IMR-90 (cell line): ENCODE measurements at regions of chr10 and their contacts with region 1.

Region 1: DNA sequence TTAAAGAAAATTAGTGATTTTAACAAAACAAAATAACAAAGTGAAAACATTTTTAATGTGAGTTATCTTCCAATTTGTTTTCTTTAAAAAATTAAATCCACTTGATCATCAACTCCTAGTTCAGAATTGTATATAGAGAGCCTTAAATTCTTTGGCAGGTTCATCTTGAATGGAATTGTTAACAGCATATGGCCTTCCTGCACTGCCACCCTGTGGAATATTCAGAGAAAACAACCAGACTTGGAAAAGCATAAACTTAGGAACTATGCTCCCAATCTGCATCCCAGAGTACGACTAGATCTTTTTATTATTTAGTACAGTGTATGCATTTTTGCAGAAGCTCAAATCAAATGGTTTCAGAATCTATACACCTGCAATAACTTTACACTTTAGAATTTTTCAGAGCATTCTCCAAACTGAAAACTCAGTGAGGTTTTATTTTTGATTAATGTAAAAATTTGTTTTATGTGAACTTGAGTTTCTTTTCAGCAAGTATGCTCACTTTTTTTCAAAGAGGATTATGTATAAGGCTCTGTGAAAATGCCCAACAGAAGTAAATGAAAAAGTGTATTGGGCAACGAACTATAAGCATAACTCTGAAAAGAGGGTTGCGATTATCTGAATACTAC is 44.9 kb upstream of the ANK3 start:
- DNase-seq: peak; percentile 74
- ATAC-seq: peak; percentile 58
- H3K4me3 ChIP-seq: no peak overlapping the region
- H3K27ac ChIP-seq: no peak overlapping the region
- H3K4me1 ChIP-seq: peaks cover 7% of the 10 kb centered on the region
- H3K27me3 ChIP-seq: peaks cover 2% of the 10 kb centered on the region; the same call in 1 of the 2 replicates
- CTCF ChIP-seq: peak; percentile 87
- POLR2A ChIP-seq: peak; percentile 50; the same call in 1 of the 2 replicates
- RAD21 ChIP-seq: peak; percentile 97

Region 2: DNA sequence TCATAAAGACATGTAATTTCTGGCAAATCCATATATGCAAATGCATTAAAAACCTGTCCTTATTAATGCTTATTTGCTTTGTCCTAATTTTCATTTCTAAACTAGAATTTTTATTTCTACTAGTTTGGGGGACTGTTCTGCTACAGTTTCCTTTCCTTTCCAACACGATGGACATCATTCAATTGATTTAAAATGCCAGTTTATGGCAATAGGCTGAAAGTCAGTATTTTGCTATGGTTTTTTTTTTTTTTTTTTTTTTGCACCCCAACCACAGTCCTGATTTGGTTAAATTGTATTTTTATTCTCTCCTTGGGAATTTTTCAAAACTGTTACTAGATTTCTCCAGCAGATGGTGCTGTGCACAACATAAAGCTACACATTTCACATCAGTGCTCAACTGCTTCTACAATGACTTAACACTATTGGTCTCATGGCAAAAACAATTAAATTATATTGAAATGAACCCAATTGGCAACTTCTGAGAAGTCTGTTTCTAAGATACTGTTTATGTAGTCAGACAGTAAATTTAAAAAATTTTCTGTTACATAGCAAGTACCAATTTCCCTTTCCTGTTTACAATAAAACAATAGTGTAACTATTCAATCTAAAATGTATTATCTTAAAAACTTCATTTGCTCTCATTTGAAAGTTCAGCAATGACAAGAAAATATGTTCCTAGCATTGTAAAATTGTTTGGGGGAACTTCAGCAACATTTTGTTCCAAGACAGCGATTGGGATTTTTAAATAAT is 334.4 kb before region 1 on chr10:
- CTCF ChIA-PET with region 1: interaction called, 3 read pairs
- POLR2A ChIA-PET with region 1: no interaction called
- dilution Hi-C with region 1: no loop called
- in situ Hi-C with region 1: no loop called
- intact Hi-C with region 1: loop called (anchors 1 kb)
- DNase-seq: peak; percentile 63
- ATAC-seq: peak; percentile 63
- H3K4me3 ChIP-seq: no peak overlapping the region
- H3K27ac ChIP-seq: no peak overlapping the region
- H3K4me1 ChIP-seq: peaks cover 1% of the 10 kb centered on the region; the same call in 1 of the 2 replicates
- H3K27me3 ChIP-seq: peaks cover 1% of the 10 kb centered on the region; the same call in 1 of the 2 replicates
- CTCF ChIP-seq: peak; percentile 69
- POLR2A ChIP-seq: no peak
- RAD21 ChIP-seq: peak; percentile 73

Region 3: DNA sequence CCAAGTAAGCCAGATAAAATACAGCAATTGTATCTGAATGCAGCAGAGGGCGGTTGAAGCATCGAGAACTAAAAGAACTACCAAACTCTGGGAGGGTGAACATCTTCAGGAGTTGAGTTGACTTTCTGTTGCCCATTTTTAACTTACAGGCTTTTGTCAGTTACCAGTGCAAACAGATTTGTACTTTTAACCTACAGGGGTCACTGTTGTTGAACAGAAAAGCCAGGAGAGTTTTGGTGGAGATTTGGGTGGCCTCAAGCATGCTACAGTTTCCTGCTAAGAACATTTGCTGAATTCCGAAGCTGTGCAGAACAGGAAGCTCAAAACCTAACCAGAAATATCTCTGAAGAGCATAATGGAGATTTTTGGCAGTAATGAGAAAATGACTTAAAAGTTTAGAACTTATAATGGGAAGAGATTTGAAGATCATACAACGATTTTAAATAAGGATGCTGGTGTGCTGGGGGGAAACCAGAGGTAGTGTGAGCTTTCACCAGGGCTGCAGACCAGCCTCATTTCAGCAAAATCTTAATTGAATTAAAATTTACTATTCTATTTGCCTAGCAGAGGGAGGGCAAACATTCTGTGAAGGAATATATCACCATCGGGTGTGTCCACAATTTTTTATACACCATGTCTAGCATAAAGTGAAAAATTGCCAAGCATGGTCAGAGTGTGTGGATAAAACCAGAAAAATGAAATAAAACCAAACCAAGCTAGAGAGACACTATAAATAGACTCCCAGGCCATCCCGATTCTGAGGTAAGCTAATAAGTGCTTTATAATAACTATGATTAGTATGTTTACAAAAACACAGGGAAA is 319.6 kb before region 1 on chr10:
- CTCF ChIA-PET with region 1: interaction called, 4 read pairs
- POLR2A ChIA-PET with region 1: no interaction called
- dilution Hi-C with region 1: no loop called
- in situ Hi-C with region 1: loop called (anchors 10 kb)
- intact Hi-C with region 1: loop called (anchors 1 kb)
- DNase-seq: peak; percentile 69
- ATAC-seq: peak; percentile 70
- H3K4me3 ChIP-seq: no peak overlapping the region
- H3K27ac ChIP-seq: no peak overlapping the region
- H3K4me1 ChIP-seq: no peaks in the 10 kb centered on the region
- H3K27me3 ChIP-seq: no peaks in the 10 kb centered on the region; the same call in 1 of the 2 replicates
- CTCF ChIP-seq: peak; percentile 57
- POLR2A ChIP-seq: no peak
- RAD21 ChIP-seq: peak; percentile 64

Region 4: GRCh38 chr10:60123172-60124067 is 311.1 kb before region 1 on chr10:
- CTCF ChIA-PET with region 1: interaction called, 7 read pairs
- POLR2A ChIA-PET with region 1: no interaction called
- dilution Hi-C with region 1: no loop called
- in situ Hi-C with region 1: loop called (anchors 10 kb)
- intact Hi-C with region 1: no loop called
- DNase-seq: peak; percentile 76
- ATAC-seq: peak; percentile 74
- H3K4me3 ChIP-seq: no peak overlapping the region
- H3K27ac ChIP-seq: no peak overlapping the region
- H3K4me1 ChIP-seq: peaks cover 3% of the 10 kb centered on the region; the same call in 1 of the 2 replicates
- H3K27me3 ChIP-seq: no peaks in the 10 kb centered on the region
- CTCF ChIP-seq: no peak
- POLR2A ChIP-seq: no peak
- RAD21 ChIP-seq: no peak

Region 5: GRCh38 chr10:60208676-60209269 is 225.8 kb before region 1 on chr10:
- CTCF ChIA-PET with region 1: interaction called, 3 read pairs
- POLR2A ChIA-PET with region 1: no interaction called
- dilution Hi-C with region 1: no loop called
- in situ Hi-C with region 1: loop called (anchors 5 kb)
- intact Hi-C with region 1: loop called (anchors 1 kb)
- DNase-seq: peak; percentile 49
- ATAC-seq: peak; percentile 59
- H3K4me3 ChIP-seq: no peak overlapping the region
- H3K27ac ChIP-seq: no peak overlapping the region
- H3K4me1 ChIP-seq: no peaks in the 10 kb centered on the region
- H3K27me3 ChIP-seq: peaks cover 15% of the 10 kb centered on the region
- CTCF ChIP-seq: peak; percentile 83
- POLR2A ChIP-seq: no peak
- RAD21 ChIP-seq: peak; percentile 80

Region 6: DNA sequence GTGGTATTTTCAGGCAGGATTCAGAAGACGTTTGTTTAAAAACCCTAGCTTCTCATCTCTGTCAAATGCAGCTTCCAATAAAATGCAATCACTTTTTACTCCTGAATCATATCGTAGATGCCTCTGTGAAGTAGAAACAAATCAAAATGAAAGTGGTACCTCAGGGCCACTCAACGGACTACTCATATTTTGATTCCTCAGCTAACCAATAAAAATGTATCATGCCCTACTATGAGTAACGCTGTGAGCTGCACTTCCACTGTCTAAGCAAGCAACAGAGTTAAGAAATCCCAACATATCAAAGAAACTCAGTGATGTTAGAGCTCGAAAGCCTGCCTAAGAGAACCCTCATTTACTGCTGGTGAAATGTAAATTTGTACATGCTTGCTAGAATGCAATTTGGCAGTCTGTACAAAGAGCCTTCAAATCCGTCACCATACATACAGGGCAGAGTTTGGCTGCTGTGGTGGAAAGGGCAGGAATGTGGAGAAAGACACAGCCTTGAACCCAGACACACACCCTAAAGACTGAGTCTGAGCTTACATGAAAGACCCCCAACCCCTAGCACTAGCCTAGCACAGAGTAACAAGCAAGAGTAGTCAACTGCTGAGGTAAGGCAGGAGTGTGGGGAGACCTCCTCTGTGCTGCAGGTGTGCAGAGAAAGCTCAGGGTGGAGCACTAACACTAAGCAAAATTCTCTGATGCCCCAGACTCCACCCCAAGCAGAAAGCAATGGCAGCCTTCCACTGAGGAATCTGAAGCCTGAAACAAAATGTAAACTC is 196.4 kb before region 1 on chr10:
- CTCF ChIA-PET with region 1: interaction called, 3 read pairs
- POLR2A ChIA-PET with region 1: no interaction called
- dilution Hi-C with region 1: no loop called
- in situ Hi-C with region 1: no loop called
- intact Hi-C with region 1: loop called (anchors 1 kb)
- DNase-seq: peak; percentile 70
- ATAC-seq: peak; percentile 99
- H3K4me3 ChIP-seq: no peak overlapping the region
- H3K27ac ChIP-seq: no peak overlapping the region
- H3K4me1 ChIP-seq: no peaks in the 10 kb centered on the region; the same call in 1 of the 2 replicates
- H3K27me3 ChIP-seq: no peaks in the 10 kb centered on the region
- CTCF ChIP-seq: peak; percentile 56
- POLR2A ChIP-seq: no peak
- RAD21 ChIP-seq: peak; percentile 70

Region 7: GRCh38 chr10:60358282-60358681 is 76.2 kb before region 1 on chr10:
- CTCF ChIA-PET with region 1: no interaction called
- POLR2A ChIA-PET with region 1: no interaction called
- dilution Hi-C with region 1: no loop called
- in situ Hi-C with region 1: no loop called
- intact Hi-C with region 1: no loop called
- DNase-seq: no peak
- ATAC-seq: no peak
- H3K4me3 ChIP-seq: no peak overlapping the region
- H3K27ac ChIP-seq: no peak overlapping the region
- H3K4me1 ChIP-seq: peaks cover 2% of the 10 kb centered on the region
- H3K27me3 ChIP-seq: 0 out of 2 replicates have a peak, but pooled peaks cover 2% of the 10 kb centered on the region
- CTCF ChIP-seq: no peak
- POLR2A ChIP-seq: no peak
- RAD21 ChIP-seq: no peak